Naive thymus-derived CD4-positive, alpha-beta T cell (primary cell): ENCODE measurements at regions of chr12 and their contacts with region 1.

Region 1: GRCh38 chr12:132887513-132888351 is at the start of gene CHFR:
- DNase-seq: peak; percentile 89 to 95 (median 93)
- ATAC-seq: peak; percentile 99
- H3K4me3 ChIP-seq: peak within 1 kb of the TSS; percentile 100
- H3K4me3 Mint-ChIP-seq: peak within 1 kb of the TSS; percentile 93 to 100 (median 97)
- H3K27ac ChIP-seq: peak within 1 kb of the TSS; percentile 94
- H3K27ac Mint-ChIP-seq: peak within 1 kb of the TSS; percentile 98 to 100 (median 99)
- H3K4me1 ChIP-seq: peaks cover 9% of the 10 kb centered on the region in 2 donors
- H3K4me1 Mint-ChIP-seq: peaks cover 14 to 50% (median 32%) of the 10 kb centered on the region in 7 donors
- H3K27me3 ChIP-seq: no peaks in the 10 kb centered on the region
- H3K27me3 Mint-ChIP-seq: no peaks in the 10 kb centered on the region
- total RNA-seq, gene CHFR: 66.7 to 97.8 (median 81.7) TPM

Region 2: DNA sequence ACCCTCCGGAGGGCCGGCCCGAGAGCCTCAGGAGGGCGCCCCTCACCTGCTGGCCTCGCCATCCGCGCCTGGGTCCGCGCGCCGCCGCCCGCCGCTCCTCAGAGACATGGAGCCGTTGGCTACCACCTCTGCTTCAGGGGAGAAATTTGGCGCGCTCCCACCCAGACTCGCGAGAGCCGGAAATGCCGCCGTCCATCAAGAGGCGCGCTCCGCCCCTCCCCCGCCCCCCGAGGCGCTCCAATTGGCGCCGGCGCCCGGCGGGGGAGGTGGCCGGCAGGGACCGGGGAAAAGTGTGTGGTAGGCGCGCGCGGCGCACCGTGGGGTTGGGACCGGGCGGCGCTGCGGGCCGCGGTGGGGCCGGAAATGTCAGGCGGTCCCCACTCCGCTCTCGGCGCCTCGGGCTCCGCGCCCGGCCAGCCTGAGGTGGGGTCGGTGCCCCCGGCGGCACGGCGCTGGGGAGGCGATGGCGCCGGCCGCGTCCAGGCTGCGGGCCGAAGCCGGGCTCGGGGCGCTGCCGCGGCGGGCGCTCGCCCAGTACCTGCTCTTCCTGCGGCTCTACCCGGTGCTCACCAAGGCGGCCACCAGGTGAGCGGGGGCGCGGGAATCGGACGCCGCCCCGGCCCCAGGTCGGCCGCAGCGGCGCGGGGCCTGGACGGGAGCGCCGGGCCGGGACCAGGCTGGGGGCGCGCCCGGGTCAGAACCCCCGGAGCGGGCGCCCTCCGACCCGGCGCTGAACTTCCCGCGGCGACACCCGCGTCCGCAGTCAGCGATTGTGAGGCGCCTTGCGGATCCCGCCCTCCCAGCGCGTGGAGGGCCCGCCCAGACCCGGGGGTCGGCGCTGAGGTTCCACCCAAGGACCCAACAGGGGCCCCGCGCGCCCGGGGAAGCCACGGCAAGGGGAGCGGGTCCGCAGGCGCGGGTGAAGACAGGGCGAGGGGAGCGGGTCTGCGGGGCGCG is 200.2 kb before region 1 on chr12 and contains the starts of genes POLE and PXMP2:
- CTCF ChIA-PET with region 1: no interaction called
- POLR2A ChIA-PET with region 1: no interaction called
- intact Hi-C with region 1: loop called in 1 of 2 experiments (anchors 2 kb)
- DNase-seq: peak; percentile 85 to 94 (median 89)
- ATAC-seq: peak; percentile 98
- H3K4me3 ChIP-seq: peak within 1 kb of the TSS; percentile 47
- H3K4me3 Mint-ChIP-seq: peak within 1 kb of the TSS; percentile 65 to 89 (median 84)
- H3K27ac ChIP-seq: peak within 1 kb of the TSS; percentile 58
- H3K27ac Mint-ChIP-seq: peak within 1 kb of the TSS in 3 of 9 donors; percentile 45 to 92 (median 87)
- H3K4me1 ChIP-seq: peaks cover 4 to 14% of the 10 kb centered on the region in 2 donors
- H3K4me1 Mint-ChIP-seq: peaks cover 0 to 31% (median 22%) of the 10 kb centered on the region in 7 donors
- H3K27me3 ChIP-seq: no peaks in the 10 kb centered on the region
- H3K27me3 Mint-ChIP-seq: no peaks in the 10 kb centered on the region
- total RNA-seq, gene POLE: 54.5 to 138 (median 62.1) TPM
- total RNA-seq, gene PXMP2: 2.6 to 26.8 (median 5.4) TPM

Region 3: GRCh38 chr12:132828706-132829534 is 58.8 kb before region 1 on chr12 and contains the start of gene GOLGA3:
- CTCF ChIA-PET with region 1: no interaction called
- POLR2A ChIA-PET with region 1: interaction called, 12 read pairs
- intact Hi-C with region 1: loop called (anchors 1 kb)
- DNase-seq: peak; percentile 92 to 98 (median 95)
- ATAC-seq: peak; percentile 96
- H3K4me3 ChIP-seq: peak within 1 kb of the TSS; percentile 95
- H3K4me3 Mint-ChIP-seq: peak within 1 kb of the TSS; percentile 92 to 98 (median 96)
- H3K27ac ChIP-seq: peak within 1 kb of the TSS; percentile 99
- H3K27ac Mint-ChIP-seq: peak within 1 kb of the TSS; percentile 98 to 100 (median 100)
- H3K4me1 ChIP-seq: peaks cover 8 to 25% of the 10 kb centered on the region in 2 donors
- H3K4me1 Mint-ChIP-seq: peaks cover 28 to 69% (median 58%) of the 10 kb centered on the region in 7 donors
- H3K27me3 ChIP-seq: no peaks in the 10 kb centered on the region
- H3K27me3 Mint-ChIP-seq: peaks cover 0 to 3% (median 0%) of the 10 kb centered on the region in 5 donors
- total RNA-seq, gene GOLGA3: 46.3 to 65.7 (median 63.6) TPM

Region 4: GRCh38 chr12:132872975-132873421 is 14.7 kb before region 1 on chr12:
- CTCF ChIA-PET with region 1: interaction called, 3 read pairs
- POLR2A ChIA-PET with region 1: interaction called, 25 read pairs
- intact Hi-C with region 1: loop called (anchors 2 kb)
- DNase-seq: peak in 6 of 9 donors; percentile 30 to 54 (median 48)
- ATAC-seq: peak; percentile 64
- H3K4me3 ChIP-seq: no peak overlapping the region
- H3K4me3 Mint-ChIP-seq: peak overlapping the region in 9 of 10 donors; percentile 45 to 81 (median 74)
- H3K27ac ChIP-seq: peak overlapping the region; percentile 62
- H3K27ac Mint-ChIP-seq: peak overlapping the region; percentile 81 to 96 (median 89)
- H3K4me1 ChIP-seq: peaks cover 4 to 21% of the 10 kb centered on the region in 2 donors
- H3K4me1 Mint-ChIP-seq: peaks cover 10 to 38% (median 27%) of the 10 kb centered on the region in 7 donors
- H3K27me3 ChIP-seq: no peaks in the 10 kb centered on the region
- H3K27me3 Mint-ChIP-seq: no peaks in the 10 kb centered on the region

Region 5: DNA sequence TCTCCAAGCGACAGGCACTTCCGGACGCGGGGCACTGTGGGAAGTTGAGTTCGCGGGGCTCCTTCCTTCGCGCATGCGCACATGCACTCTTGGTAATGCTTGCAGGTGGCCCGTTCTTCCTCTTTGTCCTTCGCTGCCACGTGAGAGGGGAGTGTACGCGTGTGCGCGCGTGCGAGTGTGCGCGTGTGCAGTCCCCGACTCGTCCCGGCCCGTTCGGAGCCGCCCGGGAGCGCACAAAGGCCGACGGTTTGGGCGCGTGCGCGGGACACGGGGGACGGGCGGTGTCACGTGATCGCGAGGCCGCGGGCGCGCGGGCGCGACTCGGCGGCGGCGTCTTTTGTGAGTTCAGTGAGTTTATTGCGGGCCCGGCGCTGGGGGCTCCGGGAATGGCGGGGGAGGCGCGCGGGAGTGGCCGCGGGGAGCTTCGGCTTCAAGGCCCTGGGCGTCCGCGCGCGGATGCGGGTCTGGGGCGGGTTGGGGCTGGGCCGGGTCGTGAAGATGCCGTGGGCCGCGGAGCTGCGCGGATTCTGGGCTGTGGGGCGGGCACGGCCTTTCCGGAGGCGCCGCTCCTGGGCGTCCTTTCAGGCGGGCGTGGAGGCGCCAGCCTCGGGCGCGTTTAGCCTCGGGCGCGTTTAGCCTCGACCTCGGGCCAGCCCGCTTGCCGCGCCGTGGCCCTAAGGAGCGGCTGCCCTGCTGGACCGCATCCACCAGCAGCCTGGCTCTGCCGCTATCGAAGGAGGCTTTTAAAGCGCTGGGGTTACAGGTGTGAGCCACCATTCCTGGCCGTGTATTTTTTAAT is 149.7 kb after region 1 on chr12 and contains the start of gene ZNF84:
- CTCF ChIA-PET with region 1: no interaction called
- POLR2A ChIA-PET with region 1: no interaction called
- intact Hi-C with region 1: loop called (anchors 1 kb)
- DNase-seq: peak; percentile 93 to 99 (median 97)
- ATAC-seq: peak; percentile 96
- H3K4me3 ChIP-seq: peak within 1 kb of the TSS; percentile 65
- H3K4me3 Mint-ChIP-seq: peak within 1 kb of the TSS; percentile 78 to 96 (median 94)
- H3K27ac ChIP-seq: peak within 1 kb of the TSS; percentile 94
- H3K27ac Mint-ChIP-seq: peak within 1 kb of the TSS; percentile 87 to 99 (median 94)
- H3K4me1 ChIP-seq: peaks cover 0 to 4% of the 10 kb centered on the region in 2 donors
- H3K4me1 Mint-ChIP-seq: peaks cover 0 to 37% (median 13%) of the 10 kb centered on the region in 7 donors
- H3K27me3 ChIP-seq: no peaks in the 10 kb centered on the region
- H3K27me3 Mint-ChIP-seq: peaks cover 0 to 9% (median 3%) of the 10 kb centered on the region in 5 donors
- total RNA-seq, gene ZNF84: 27.4 to 52.7 (median 31.6) TPM

Region 6: DNA sequence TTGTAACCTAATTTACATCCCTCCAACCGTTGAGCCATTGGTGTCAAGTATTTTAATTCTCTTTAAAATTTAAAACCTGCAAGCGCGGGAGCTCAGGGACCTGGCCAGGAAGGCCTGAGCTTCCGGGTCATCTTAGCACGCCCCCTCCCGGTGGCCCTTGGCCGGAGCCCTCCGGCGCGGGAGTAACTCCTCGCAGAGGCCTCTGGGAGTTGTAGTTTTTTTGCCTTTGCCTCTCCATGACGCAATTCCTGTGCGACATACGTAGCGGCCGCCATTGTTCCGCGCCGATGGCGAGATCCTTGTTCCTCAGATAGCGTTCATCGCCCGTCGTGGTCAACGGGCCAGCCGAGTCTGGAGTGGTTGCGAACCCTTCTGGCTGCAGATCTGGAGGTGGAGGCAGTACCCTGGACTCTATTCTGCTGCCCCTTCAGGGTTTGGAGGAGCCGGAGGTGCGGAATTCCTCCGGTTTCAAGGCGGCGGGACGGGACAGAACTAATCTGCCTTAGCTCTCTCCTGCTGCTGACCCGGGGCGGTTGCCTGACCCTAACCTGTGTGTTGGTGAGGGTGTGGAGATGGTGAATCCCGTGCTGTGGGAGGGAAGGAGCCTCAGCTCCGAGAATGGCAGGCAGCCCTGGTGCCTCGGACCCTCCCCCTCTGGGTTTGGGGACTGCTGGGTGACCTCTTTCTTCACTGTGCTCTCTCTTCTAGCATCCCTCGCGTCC is 293.7 kb after region 1 on chr12 and contains the start of gene ZNF268:
- CTCF ChIA-PET with region 1: no interaction called
- POLR2A ChIA-PET with region 1: no interaction called
- intact Hi-C with region 1: loop called (anchors 1 kb)
- DNase-seq: peak; percentile 75 to 90 (median 86)
- ATAC-seq: peak; percentile 99
- H3K4me3 ChIP-seq: peak within 1 kb of the TSS; percentile 100
- H3K4me3 Mint-ChIP-seq: peak within 1 kb of the TSS; percentile 90 to 99 (median 95)
- H3K27ac ChIP-seq: peak within 1 kb of the TSS; percentile 84
- H3K27ac Mint-ChIP-seq: peak within 1 kb of the TSS; percentile 85 to 97 (median 92)
- H3K4me1 ChIP-seq: peaks cover 7 to 9% of the 10 kb centered on the region in 2 donors
- H3K4me1 Mint-ChIP-seq: peaks cover 16 to 34% (median 31%) of the 10 kb centered on the region in 7 donors
- H3K27me3 ChIP-seq: no peaks in the 10 kb centered on the region
- H3K27me3 Mint-ChIP-seq: no peaks in the 10 kb centered on the region
- total RNA-seq, gene ZNF268: 13.6 to 38.6 (median 18.6) TPM